SK-N-SH (cell line): ENCODE measurements at regions of chr17 and their contacts with region 1.

Region 1: GRCh38 chr17:37813751-37814150 is 68.9 kb upstream of the HNF1B start:
- DNase-seq: no peak
- H3K4me3 ChIP-seq: no peak overlapping the region
- H3K27ac ChIP-seq: peak overlapping the region in 1 of 2 experiments; percentile 65; a peak in 2 of 4 replicates
- H3K4me1 ChIP-seq: 0 out of 4 replicates have a peak, but pooled peaks cover 0 to 3% of the 10 kb centered on the region in 2 experiments
- H3K27me3 ChIP-seq: no peaks in the 10 kb centered on the region
- CTCF ChIP-seq: no peak
- EP300 ChIP-seq: peak in 1 of 2 experiments; percentile 75; a peak in 1 of 4 replicates
- RAD21 ChIP-seq: no peak

Region 2: DNA sequence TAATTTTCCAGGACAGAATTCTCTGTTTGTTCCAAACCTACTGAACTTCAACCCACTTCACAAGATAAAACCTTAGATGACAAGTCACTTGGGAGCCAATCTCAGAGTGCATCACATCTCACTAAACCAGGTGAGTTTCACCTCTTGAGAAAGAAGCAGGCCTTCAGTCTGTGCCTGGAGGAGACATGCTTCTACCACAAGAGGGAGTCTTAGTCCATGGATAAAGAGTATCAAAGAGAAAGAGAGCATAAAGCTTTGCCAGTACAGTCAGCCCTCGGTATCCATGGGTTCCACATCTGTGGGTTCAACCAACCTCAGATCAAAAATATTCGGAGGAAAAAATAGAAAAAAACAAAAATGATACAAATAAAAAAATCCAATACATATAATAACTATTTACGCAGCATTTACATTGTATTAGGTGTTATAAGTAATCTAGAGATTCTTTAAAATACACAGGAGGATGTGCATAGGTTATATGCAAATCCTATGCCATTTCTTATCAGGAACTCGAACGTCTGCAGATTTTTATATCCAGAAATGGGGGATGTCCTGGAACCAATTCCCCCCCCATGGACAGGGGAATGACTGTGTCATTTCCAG is 286.4 kb before region 1 on chr17:
- CTCF ChIA-PET with region 1: interaction called, 13 read pairs
- POLR2A ChIA-PET with region 1: no interaction called
- DNase-seq: peak; percentile 53
- H3K4me3 ChIP-seq: peak overlapping the region in 1 of 2 experiments; percentile 28; a peak in 1 of 4 replicates
- H3K27ac ChIP-seq: no peak overlapping the region
- H3K4me1 ChIP-seq: no peaks in the 10 kb centered on the region
- H3K27me3 ChIP-seq: no peaks in the 10 kb centered on the region
- CTCF ChIP-seq: peak; percentile 78
- EP300 ChIP-seq: no peak
- RAD21 ChIP-seq: peak; percentile 79

Region 3: GRCh38 chr17:37650419-37651003 is 163.2 kb before region 1 on chr17:
- CTCF ChIA-PET with region 1: interaction called, 85 read pairs
- POLR2A ChIA-PET with region 1: no interaction called
- DNase-seq: peak; percentile 54
- H3K4me3 ChIP-seq: no peak overlapping the region; a peak in 1 of 4 replicates
- H3K27ac ChIP-seq: no peak overlapping the region
- H3K4me1 ChIP-seq: no peaks in the 10 kb centered on the region; a peak in 1 of 4 replicates
- H3K27me3 ChIP-seq: no peaks in the 10 kb centered on the region
- CTCF ChIP-seq: peak; percentile 77
- EP300 ChIP-seq: no peak
- RAD21 ChIP-seq: peak; percentile 83

Region 4: GRCh38 chr17:37657202-37657601 is 156.5 kb before region 1 on chr17:
- CTCF ChIA-PET with region 1: interaction called, 85 read pairs
- POLR2A ChIA-PET with region 1: no interaction called
- DNase-seq: no peak
- H3K4me3 ChIP-seq: no peak overlapping the region
- H3K27ac ChIP-seq: no peak overlapping the region
- H3K4me1 ChIP-seq: no peaks in the 10 kb centered on the region
- H3K27me3 ChIP-seq: no peaks in the 10 kb centered on the region
- CTCF ChIP-seq: no peak
- EP300 ChIP-seq: no peak
- RAD21 ChIP-seq: no peak

Region 5: GRCh38 chr17:37698132-37698615 is 115.6 kb before region 1 on chr17:
- CTCF ChIA-PET with region 1: no interaction called
- POLR2A ChIA-PET with region 1: no interaction called
- DNase-seq: no peak
- H3K4me3 ChIP-seq: no peak overlapping the region
- H3K27ac ChIP-seq: no peak overlapping the region
- H3K4me1 ChIP-seq: no peaks in the 10 kb centered on the region; a peak in 1 of 4 replicates
- H3K27me3 ChIP-seq: no peaks in the 10 kb centered on the region
- CTCF ChIP-seq: no peak
- EP300 ChIP-seq: no peak
- RAD21 ChIP-seq: no peak

Region 6: DNA sequence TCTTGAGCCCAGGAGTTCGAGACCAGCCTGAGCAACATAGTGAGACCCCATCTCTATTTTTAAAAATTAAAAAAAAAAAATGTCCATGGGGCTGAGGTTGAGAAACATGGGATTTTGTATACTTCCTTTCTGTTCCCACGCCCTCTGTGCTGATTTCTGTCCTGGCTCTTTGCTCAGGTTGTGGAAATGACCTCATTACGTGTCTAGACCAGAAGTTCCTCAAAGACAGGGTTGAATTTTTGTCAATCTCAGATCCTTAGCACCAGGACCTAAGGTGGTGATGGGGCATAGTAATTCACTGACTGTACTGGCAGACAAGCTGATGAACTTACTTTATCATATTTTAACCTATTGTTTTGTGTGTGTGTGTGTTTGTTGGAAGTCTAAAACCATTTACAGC is 57.7 kb before region 1 on chr17:
- CTCF ChIA-PET with region 1: no interaction called
- POLR2A ChIA-PET with region 1: no interaction called
- DNase-seq: no peak
- H3K4me3 ChIP-seq: no peak overlapping the region
- H3K27ac ChIP-seq: no peak overlapping the region
- H3K4me1 ChIP-seq: peaks cover 0 to 13% of the 10 kb centered on the region in 2 experiments; a peak in 1 of 4 replicates
- H3K27me3 ChIP-seq: no peaks in the 10 kb centered on the region
- CTCF ChIP-seq: no peak
- EP300 ChIP-seq: no peak
- RAD21 ChIP-seq: no peak

Region 7: DNA sequence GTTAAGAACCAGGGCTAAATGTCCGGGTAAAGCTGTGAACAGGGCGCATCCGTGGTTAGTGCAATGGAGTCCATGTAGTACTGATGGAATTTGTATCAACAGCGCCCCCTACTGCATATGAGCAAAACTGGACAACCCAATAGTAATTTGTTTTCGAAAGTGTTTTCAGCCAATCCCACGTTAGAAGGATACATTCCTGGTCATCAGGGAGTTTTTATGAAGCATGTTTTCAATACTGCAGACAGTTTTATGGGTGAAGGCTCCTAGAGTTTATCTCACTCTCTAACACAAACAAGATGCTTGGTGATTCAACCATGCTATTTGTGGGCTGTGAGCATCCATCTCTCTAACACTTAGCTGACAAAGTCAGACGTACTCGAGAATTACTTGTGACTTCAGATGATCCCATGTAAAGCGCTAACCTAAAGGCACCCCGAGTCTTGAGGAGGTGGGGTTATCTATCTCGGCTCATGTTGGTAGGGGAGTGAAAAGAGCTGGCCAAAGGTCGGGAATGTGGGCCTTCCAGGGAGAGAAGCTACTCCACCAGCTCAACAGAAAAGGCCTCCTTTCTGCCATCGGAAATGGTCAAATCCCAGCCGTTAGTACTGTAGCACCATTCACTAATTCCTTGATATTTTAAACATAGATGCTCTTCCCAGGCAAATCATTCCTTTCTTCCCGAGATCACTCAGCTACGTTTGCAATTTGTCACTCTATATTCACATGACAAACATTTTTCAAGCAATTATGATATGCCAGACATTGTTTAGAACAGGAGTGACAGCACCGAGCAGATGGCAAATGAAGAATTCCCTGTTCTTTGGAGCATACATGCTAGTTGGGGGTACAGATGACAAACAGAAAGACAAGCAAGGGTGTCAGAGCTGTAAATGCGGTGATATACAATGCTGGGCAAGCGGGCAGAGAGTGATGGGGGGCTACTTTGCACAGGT is 22.0 kb before region 1 on chr17:
- CTCF ChIA-PET with region 1: interaction called, 10 read pairs
- POLR2A ChIA-PET with region 1: no interaction called
- DNase-seq: peak; percentile 19
- H3K4me3 ChIP-seq: no peak overlapping the region
- H3K27ac ChIP-seq: no peak overlapping the region
- H3K4me1 ChIP-seq: peaks cover 0 to 6% of the 10 kb centered on the region in 2 experiments; a peak in 2 of 4 replicates
- H3K27me3 ChIP-seq: no peaks in the 10 kb centered on the region
- CTCF ChIP-seq: peak; percentile 66
- EP300 ChIP-seq: no peak
- RAD21 ChIP-seq: peak; percentile 18; the same call in 1 of the 2 replicates

Region 8: GRCh38 chr17:37824534-37825485 is 11.1 kb after region 1 on chr17:
- CTCF ChIA-PET with region 1: interaction called, 16 read pairs
- POLR2A ChIA-PET with region 1: no interaction called
- DNase-seq: no peak
- H3K4me3 ChIP-seq: no peak overlapping the region
- H3K27ac ChIP-seq: peak overlapping the region in 1 of 2 experiments; percentile 62; a peak in 2 of 4 replicates
- H3K4me1 ChIP-seq: peaks cover 0 to 17% of the 10 kb centered on the region in 2 experiments; a peak in 2 of 4 replicates
- H3K27me3 ChIP-seq: no peaks in the 10 kb centered on the region
- CTCF ChIP-seq: no peak
- EP300 ChIP-seq: no peak
- RAD21 ChIP-seq: no peak